Activated B cell treated with CpG ODN at 0.5 μM for 24 hours (primary cell): ENCODE measurements at regions of chr2 and their contacts with region 1.

Region 1: DNA sequence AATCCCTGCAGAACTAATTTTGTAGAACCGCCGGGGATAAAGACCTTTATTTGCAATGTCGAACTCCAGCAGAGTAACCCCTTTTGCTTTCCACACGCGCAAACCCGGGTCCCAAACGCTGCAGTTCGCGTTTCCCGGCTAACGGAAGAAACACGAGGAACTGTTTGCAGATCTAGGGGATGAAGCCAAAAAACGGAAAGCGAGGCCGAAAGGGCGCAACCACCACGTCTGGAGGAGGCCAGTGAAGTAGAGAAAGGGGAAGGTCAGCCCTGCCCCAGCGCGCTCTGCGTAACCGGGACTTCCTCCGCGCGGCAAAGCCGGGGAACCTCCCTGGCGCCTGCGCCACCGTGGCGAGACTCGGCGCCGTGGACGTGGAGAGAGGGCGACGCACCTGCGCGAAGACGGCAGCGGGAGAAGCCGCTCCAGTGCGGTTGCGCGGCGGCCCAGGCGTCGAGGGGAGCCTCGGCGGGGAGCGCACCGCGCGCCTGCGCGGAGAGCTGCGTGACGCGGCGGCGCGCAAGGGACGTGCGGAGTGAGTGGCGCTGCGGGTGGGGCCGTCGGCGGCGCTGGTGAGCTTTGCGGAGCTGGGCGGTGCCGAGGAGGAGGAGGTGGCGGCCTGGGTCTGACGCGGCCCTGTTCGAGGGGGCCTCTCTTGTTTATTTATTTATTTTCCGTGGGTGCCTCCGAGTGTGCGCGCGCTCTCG is at the start of gene PPP1CB:
- DNase-seq: peak; percentile 96
- ATAC-seq: peak; percentile 86
- H3K4me3 Mint-ChIP-seq: peak within 1 kb of the TSS; percentile 95
- H3K27ac Mint-ChIP-seq: peak within 1 kb of the TSS; percentile 98
- H3K4me1 Mint-ChIP-seq: peaks cover 54% of the 10 kb centered on the region
- H3K27me3 Mint-ChIP-seq: no peaks in the 10 kb centered on the region
- CTCF ChIP-seq: no peak
- total RNA-seq, gene PPP1CB: 130 and 135 TPM in 2 replicates

Region 2: DNA sequence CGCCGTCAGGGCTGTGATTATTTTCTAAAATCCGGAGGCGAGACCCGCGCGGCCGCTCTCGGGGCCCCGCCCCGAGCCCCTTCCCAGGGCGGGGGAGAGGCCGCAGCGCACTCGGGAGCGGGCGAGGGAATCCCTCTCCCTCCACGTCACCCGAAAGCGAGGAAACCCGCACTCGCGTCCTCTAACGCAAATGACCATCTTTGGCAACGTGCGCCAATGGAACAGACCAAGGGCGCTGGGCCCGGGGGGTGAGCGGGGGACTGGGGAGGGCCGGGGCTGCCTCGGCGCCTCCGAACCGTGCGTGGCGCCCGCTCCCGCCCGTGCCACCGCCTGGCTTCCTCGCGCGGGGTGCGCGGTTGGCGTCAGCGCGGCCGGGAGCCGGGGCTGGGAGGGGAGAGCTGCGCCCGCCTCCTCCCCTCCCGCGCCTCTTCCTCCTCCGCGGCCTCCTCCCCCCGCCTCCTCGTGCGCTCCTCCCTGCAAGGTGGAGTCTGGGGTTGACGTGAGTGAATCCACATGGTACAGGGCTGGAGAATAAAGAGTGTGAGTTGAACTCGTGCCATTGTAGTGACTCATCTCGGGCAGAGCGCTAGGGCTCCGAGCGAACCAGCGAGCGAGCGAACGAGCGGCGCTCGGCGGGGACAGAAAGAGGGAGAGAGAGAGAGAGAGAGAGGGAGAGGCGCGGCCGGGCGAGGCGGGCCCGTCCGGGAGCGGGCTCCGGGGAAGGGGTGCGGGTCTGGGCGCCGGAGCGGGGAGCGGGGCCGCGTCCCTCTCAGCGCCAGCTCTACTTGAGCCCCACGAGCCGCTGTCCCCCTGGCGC is 358.9 kb before region 1 on chr2 and contains the start of gene FOSL2:
- CTCF ChIA-PET with region 1: no interaction called
- POLR2A ChIA-PET with region 1: interaction called, 3 read pairs
- intact Hi-C with region 1: loop called (anchors 2 kb)
- DNase-seq: peak; percentile 78
- ATAC-seq: peak; percentile 84
- H3K4me3 Mint-ChIP-seq: peak within 1 kb of the TSS; percentile 86
- H3K27ac Mint-ChIP-seq: peak within 1 kb of the TSS; percentile 89
- H3K4me1 Mint-ChIP-seq: peaks cover 17% of the 10 kb centered on the region
- H3K27me3 Mint-ChIP-seq: peaks cover 10% of the 10 kb centered on the region
- CTCF ChIP-seq: no peak
- total RNA-seq, gene FOSL2: 2.7 and 3.8 TPM in 2 replicates

Region 3: GRCh38 chr2:28621172-28622100 is 130.0 kb before region 1 on chr2:
- CTCF ChIA-PET with region 1: no interaction called
- POLR2A ChIA-PET with region 1: interaction called, 3 read pairs
- intact Hi-C with region 1: loop called (anchors 1 kb)
- DNase-seq: no peak
- ATAC-seq: peak; percentile 38
- H3K4me3 Mint-ChIP-seq: peak overlapping the region; percentile 48
- H3K27ac Mint-ChIP-seq: peak overlapping the region; percentile 79
- H3K4me1 Mint-ChIP-seq: peaks cover 42% of the 10 kb centered on the region
- H3K27me3 Mint-ChIP-seq: no peaks in the 10 kb centered on the region
- CTCF ChIP-seq: no peak

Region 4: GRCh38 chr2:28716265-28716867 is 35.0 kb before region 1 on chr2:
- CTCF ChIA-PET with region 1: no interaction called
- POLR2A ChIA-PET with region 1: interaction called, 10 read pairs
- intact Hi-C with region 1: loop called (anchors 1 kb)
- DNase-seq: no peak
- ATAC-seq: peak; percentile 80
- H3K4me3 Mint-ChIP-seq: no peak overlapping the region
- H3K27ac Mint-ChIP-seq: peak overlapping the region; percentile 78
- H3K4me1 Mint-ChIP-seq: peaks cover 25% of the 10 kb centered on the region
- H3K27me3 Mint-ChIP-seq: no peaks in the 10 kb centered on the region
- CTCF ChIP-seq: no peak

Region 5: DNA sequence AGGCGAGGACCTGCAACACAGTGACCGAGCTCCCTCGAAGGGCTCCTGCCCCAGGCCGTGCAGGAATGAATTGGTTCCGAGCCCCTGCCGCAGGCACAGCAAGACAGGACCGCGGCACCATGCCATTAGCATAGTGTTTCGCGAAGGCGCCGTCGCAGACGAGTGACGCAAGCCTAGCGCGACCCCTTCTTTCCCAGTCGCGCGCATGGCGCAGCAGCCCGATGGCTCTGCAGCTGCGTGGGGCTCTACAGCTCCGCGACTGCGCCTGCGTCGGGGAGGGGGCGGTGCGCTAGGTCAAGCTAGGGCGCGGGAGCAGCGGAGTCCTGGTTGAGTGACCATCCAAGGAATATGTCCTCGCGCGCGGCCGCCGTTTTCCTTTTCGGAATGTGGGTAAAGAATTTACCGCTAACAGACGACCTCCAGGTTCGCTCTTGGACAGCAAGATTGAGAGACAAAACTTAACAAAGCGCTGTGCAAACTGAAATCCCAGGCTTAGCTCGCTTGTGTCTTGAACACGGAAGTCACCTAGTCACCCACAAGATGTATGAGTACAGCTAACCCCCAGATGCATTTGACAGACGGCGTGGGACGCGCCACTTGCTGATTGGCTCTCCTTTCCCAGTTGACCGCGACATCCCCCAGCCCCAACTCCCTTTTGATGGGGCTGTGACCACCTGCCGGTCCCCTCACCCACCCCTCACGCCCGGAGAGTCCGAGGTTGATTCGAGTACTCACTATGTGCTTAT is 118.9 kb after region 1 on chr2 and contains the start of gene TRMT61B:
- CTCF ChIA-PET with region 1: no interaction called
- POLR2A ChIA-PET with region 1: interaction called, 23 read pairs
- intact Hi-C with region 1: loop called (anchors 1 kb)
- DNase-seq: peak; percentile 98
- ATAC-seq: peak; percentile 97
- H3K4me3 Mint-ChIP-seq: peak within 1 kb of the TSS; percentile 97
- H3K27ac Mint-ChIP-seq: peak within 1 kb of the TSS; percentile 99
- H3K4me1 Mint-ChIP-seq: peaks cover 38% of the 10 kb centered on the region
- H3K27me3 Mint-ChIP-seq: no peaks in the 10 kb centered on the region
- CTCF ChIP-seq: no peak
- total RNA-seq, gene TRMT61B: 16.8 and 18.0 TPM in 2 replicates